ENCODE measurements at regions of chr2 and their contacts with region 1.

Region 1: GRCh38 chr2:169221745-169222369 is 140.5 kb downstream of the LRP2 start:
- DNase-seq: peak; percentile 24
- ATAC-seq: peak; percentile 86
- H3K4me3 ChIP-seq: peak overlapping the region in 1 of 2 experiments; percentile 13; a peak in 1 of 4 replicates
- H3K27ac ChIP-seq: no peak overlapping the region
- H3K4me1 ChIP-seq: peaks cover 0 to 4% of the 10 kb centered on the region in 2 experiments; a peak in 1 of 4 replicates
- H3K27me3 ChIP-seq: no peaks in the 10 kb centered on the region
- CTCF ChIP-seq: peak; percentile 49 to 74 (median 63); a peak in 5 of 6 replicates
- POLR2A ChIP-seq: no peak
- RAD21 ChIP-seq: peak; percentile 74

Region 2: DNA sequence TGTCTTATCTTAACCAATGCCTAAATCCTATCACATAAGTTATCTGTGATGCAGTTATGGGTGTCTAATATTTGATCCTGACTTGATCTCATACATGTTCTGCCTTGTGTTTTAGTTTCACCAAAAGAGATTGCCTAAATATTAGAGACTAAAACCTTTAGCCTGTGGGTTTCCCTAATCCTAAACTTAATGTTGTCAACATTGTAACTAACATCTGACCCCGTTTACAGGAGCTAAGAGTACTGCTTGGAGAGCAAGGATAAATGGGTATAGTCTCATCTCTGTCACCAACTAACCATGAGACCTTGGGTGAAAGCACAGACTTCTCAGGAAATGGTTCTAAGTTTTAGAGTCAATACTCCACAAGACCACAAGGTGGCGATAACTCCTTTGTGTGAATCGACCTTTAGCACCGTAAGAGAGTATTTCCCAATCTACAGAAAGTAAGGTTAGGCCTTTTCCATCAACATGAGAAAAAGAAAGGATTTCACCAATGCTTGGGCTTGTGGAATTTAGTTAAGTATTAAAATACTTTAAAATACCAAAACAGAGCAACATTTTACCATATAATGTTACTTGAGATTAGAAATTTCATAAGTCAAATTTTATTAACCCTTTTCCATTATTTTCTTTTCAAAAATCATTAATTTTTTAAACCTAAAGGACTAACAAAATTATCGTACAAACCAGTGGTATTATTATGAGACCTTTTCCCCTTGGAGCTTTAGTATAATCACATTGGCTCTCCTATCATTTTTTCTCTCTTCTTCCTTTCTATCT is 260.2 kb before region 1 on chr2:
- CTCF ChIA-PET with region 1: interaction called, 4 read pairs
- POLR2A ChIA-PET with region 1: no interaction called
- RAD21 ChIA-PET with region 1: no interaction called
- intact Hi-C with region 1: loop called (anchors 5 kb)
- DNase-seq: peak; percentile 79
- ATAC-seq: peak; percentile 98
- H3K4me3 ChIP-seq: no peak overlapping the region
- H3K27ac ChIP-seq: no peak overlapping the region
- H3K4me1 ChIP-seq: 0 out of 4 replicates have a peak, but pooled peaks cover 0 to 2% of the 10 kb centered on the region in 2 experiments
- H3K27me3 ChIP-seq: no peaks in the 10 kb centered on the region
- CTCF ChIP-seq: peak; percentile 69 to 89 (median 81)
- POLR2A ChIP-seq: no peak
- RAD21 ChIP-seq: peak; percentile 86

Region 3: GRCh38 chr2:169131587-169132512 is 90.0 kb before region 1 on chr2:
- CTCF ChIA-PET with region 1: interaction called, 18 read pairs
- POLR2A ChIA-PET with region 1: no interaction called
- RAD21 ChIA-PET with region 1: no interaction called
- intact Hi-C with region 1: no loop called
- DNase-seq: peak; percentile 77
- ATAC-seq: peak; percentile 98
- H3K4me3 ChIP-seq: no peak overlapping the region
- H3K27ac ChIP-seq: no peak overlapping the region
- H3K4me1 ChIP-seq: 0 out of 4 replicates have a peak, but pooled peaks cover 0 to 2% of the 10 kb centered on the region in 2 experiments
- H3K27me3 ChIP-seq: no peaks in the 10 kb centered on the region
- CTCF ChIP-seq: peak; percentile 69 to 98 (median 79)
- POLR2A ChIP-seq: no peak
- RAD21 ChIP-seq: peak; percentile 68

Region 4: DNA sequence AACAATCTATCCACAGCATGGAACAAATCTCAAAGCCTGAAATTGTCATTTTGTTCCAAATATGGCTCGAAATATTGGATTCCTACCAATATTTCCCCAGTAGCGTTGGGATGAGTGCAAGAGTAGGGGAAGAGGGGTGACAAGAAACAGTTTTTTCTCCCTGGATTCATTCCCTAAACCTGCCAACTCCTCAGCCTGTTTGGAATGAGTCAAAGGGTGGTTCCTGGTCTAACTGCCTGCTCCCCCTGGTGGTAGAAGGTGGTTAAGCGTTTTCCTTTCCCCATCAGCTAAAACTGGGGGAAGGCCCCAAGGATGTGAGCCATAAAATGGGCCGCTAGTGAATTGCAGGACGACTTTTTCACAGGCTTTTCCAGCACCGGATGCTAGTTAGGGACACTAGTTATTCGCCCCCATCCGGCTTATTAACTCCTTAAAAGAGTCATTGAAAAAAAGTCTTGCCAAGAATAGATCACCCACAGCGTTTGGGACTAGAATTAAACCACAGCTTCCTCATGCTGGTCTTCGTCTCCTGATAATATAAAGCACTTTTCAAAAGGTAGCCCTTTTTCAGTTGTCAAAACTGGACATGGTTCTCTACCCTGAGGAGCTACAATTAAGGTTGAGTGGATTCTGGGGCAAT is 80.0 kb before region 1 on chr2:
- CTCF ChIA-PET with region 1: interaction called, 12 read pairs
- POLR2A ChIA-PET with region 1: no interaction called
- RAD21 ChIA-PET with region 1: no interaction called
- intact Hi-C with region 1: no loop called
- DNase-seq: peak; percentile 49
- ATAC-seq: peak; percentile 97
- H3K4me3 ChIP-seq: no peak overlapping the region
- H3K27ac ChIP-seq: no peak overlapping the region
- H3K4me1 ChIP-seq: no peaks in the 10 kb centered on the region
- H3K27me3 ChIP-seq: no peaks in the 10 kb centered on the region
- CTCF ChIP-seq: peak; percentile 68 to 93 (median 84)
- POLR2A ChIP-seq: no peak
- RAD21 ChIP-seq: peak; percentile 59

Region 5: GRCh38 chr2:169208026-169208425 is 13.8 kb before region 1 on chr2:
- CTCF ChIA-PET with region 1: interaction called, 27 read pairs
- POLR2A ChIA-PET with region 1: no interaction called
- RAD21 ChIA-PET with region 1: no interaction called
- intact Hi-C with region 1: no loop called
- DNase-seq: no peak
- ATAC-seq: no peak
- H3K4me3 ChIP-seq: no peak overlapping the region
- H3K27ac ChIP-seq: no peak overlapping the region
- H3K4me1 ChIP-seq: no peaks in the 10 kb centered on the region
- H3K27me3 ChIP-seq: no peaks in the 10 kb centered on the region
- CTCF ChIP-seq: no peak
- POLR2A ChIP-seq: no peak
- RAD21 ChIP-seq: no peak

Region 6: GRCh38 chr2:169260246-169260645 is 38.4 kb after region 1 on chr2:
- CTCF ChIA-PET with region 1: no interaction called
- POLR2A ChIA-PET with region 1: no interaction called
- RAD21 ChIA-PET with region 1: no interaction called
- intact Hi-C with region 1: no loop called
- DNase-seq: no peak
- ATAC-seq: peak; percentile 58
- H3K4me3 ChIP-seq: no peak overlapping the region
- H3K27ac ChIP-seq: no peak overlapping the region
- H3K4me1 ChIP-seq: peaks cover 4 to 5% of the 10 kb centered on the region in 2 experiments; a peak in 2 of 4 replicates
- H3K27me3 ChIP-seq: no peaks in the 10 kb centered on the region
- CTCF ChIP-seq: peak in 2 of 3 experiments; percentile 18; a peak in 1 of 6 replicates
- POLR2A ChIP-seq: no peak
- RAD21 ChIP-seq: peak; percentile 40

Measured in HCT116 (cell line).